ENCODE measurements at regions of chr16 and their contacts with region 1.

Region 1: DNA sequence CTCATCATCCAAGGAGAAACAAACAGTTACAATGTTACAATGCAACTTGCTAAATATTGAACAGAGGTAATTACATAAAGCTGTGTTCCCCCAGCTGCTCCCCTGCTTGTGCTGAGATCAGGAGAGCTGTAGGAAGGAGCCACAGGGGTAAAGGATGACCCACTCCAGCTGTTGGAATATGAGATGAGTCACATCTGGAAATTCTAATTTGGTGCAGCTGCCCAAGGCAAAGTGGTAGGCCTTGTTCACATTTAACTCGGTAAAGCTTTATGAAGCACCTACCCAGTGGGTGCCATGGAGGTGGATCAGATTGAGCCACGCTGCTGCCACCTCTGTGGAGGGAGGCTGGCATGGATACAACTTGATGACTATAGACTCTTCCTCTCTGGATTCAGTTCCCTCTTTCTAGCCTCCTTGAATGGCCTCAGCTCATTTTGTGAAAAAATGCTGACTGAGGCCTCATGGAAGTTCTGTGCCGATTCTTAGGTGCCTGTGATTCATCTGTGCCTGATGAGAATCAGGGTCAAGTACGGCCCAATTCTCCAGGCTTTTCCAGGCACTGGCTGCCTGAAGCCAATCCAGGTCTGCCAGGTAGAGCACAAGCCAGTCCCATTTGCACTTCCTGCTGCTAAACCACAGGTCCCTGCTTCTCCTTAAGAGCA is 7.4 kb downstream of the ZNF689 start:
- DNase-seq: no peak
- H3K4me3 Mint-ChIP-seq: no peak overlapping the region
- H3K27ac Mint-ChIP-seq: no peak overlapping the region
- H3K4me1 Mint-ChIP-seq: peaks cover 8% of the 10 kb centered on the region
- H3K27me3 Mint-ChIP-seq: no peaks in the 10 kb centered on the region

Region 2: GRCh38 chr16:30041846-30042267 is 560.9 kb before region 1 on chr16:
- CTCF ChIA-PET with region 1: no interaction called
- POLR2A ChIA-PET with region 1: no interaction called
- intact Hi-C with region 1: no loop called
- DNase-seq: no peak
- H3K4me3 Mint-ChIP-seq: no peak overlapping the region
- H3K27ac Mint-ChIP-seq: no peak overlapping the region
- H3K4me1 Mint-ChIP-seq: peaks cover 8% of the 10 kb centered on the region
- H3K27me3 Mint-ChIP-seq: peaks cover 3% of the 10 kb centered on the region

Region 3: DNA sequence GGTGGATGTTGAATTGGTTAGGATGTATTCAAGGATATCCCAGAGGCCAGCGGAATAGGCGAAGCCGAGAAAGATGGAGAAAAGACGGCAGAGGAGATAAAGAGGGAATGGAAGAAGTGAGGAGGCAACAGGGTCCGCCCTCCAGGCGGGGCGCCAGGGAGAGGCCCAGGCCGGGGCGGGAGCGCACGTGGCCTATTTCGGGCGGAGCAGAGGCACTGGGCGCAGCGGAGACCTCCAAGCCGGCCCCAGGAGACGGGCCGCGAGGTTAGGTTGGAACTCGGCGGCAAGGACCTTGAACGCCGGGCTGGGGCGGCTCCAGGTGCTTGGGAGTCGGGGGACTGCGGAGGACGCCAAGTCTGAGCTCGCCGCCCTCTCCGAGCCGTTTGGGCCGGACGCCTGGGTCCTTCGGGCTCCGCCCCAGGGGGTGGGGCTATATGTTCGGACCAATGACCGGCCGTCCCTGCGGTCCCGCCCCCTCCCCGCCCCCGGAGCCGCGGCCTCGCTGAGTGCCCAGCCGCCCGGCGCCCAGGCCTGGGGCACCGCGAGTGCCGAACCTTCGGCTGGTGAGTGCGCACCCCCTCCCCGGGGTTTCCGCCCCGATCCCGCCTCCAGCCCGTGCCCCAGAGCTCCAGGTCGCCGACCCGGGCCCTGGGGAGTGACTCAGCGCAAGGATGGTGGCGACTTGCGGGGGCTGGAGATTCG is 195.5 kb before region 1 on chr16 and contains the start of gene ZNF771:
- CTCF ChIA-PET with region 1: interaction called, 10 read pairs
- POLR2A ChIA-PET with region 1: no interaction called
- intact Hi-C with region 1: no loop called
- DNase-seq: peak; percentile 94
- H3K4me3 Mint-ChIP-seq: peak within 1 kb of the TSS; percentile 95
- H3K27ac Mint-ChIP-seq: peak within 1 kb of the TSS; percentile 91
- H3K4me1 Mint-ChIP-seq: peaks cover 25% of the 10 kb centered on the region
- H3K27me3 Mint-ChIP-seq: no peaks in the 10 kb centered on the region
- total RNA-seq, gene ZNF771: 5.4 to 5.7 TPM

Region 4: GRCh38 chr16:30557957-30558788 is 44.6 kb before region 1 on chr16 and contains the start of gene ZNF764:
- CTCF ChIA-PET with region 1: interaction called, 22 read pairs
- POLR2A ChIA-PET with region 1: interaction called, 3 read pairs
- intact Hi-C with region 1: no loop called
- DNase-seq: peak; percentile 99
- H3K4me3 Mint-ChIP-seq: peak within 1 kb of the TSS; percentile 89
- H3K27ac Mint-ChIP-seq: peak within 1 kb of the TSS; percentile 96
- H3K4me1 Mint-ChIP-seq: peaks cover 38% of the 10 kb centered on the region
- H3K27me3 Mint-ChIP-seq: no peaks in the 10 kb centered on the region
- total RNA-seq, gene ZNF764: 13.7 to 14.2 TPM

Region 5: GRCh38 chr16:30585400-30586189 is 17.2 kb before region 1 on chr16 and contains the start of gene ZNF785:
- CTCF ChIA-PET with region 1: interaction called, 29 read pairs
- POLR2A ChIA-PET with region 1: interaction called, 4 read pairs
- intact Hi-C with region 1: no loop called
- DNase-seq: peak; percentile 97
- H3K4me3 Mint-ChIP-seq: peak within 1 kb of the TSS; percentile 83
- H3K27ac Mint-ChIP-seq: peak within 1 kb of the TSS; percentile 83
- H3K4me1 Mint-ChIP-seq: peaks cover 32% of the 10 kb centered on the region
- H3K27me3 Mint-ChIP-seq: no peaks in the 10 kb centered on the region
- total RNA-seq, gene ZNF785: 14.0 to 15.0 TPM

Region 6: DNA sequence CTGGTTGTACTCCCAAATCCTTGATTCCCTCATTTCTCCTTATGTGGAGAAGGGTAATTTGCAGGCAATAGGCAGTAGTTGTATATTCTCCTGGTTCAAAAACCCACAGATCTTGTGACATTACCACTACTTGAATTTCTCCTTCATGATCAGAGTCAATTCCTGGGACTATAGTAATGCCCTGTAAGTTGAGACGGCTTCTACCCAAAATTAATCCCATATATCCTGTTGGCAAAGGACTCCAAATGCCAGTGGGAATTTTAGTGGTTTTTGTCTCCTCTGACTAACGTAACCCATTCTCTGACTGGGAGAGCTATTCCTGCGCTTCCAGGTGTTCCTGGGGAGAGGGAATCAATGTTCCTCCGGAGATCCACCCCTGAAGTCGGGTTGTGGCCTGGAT is 19.0 kb after region 1 on chr16:
- CTCF ChIA-PET with region 1: interaction called, 33 read pairs
- POLR2A ChIA-PET with region 1: no interaction called
- intact Hi-C with region 1: no loop called
- DNase-seq: no peak
- H3K4me3 Mint-ChIP-seq: no peak overlapping the region
- H3K27ac Mint-ChIP-seq: no peak overlapping the region
- H3K4me1 Mint-ChIP-seq: no peaks in the 10 kb centered on the region
- H3K27me3 Mint-ChIP-seq: peaks cover 3% of the 10 kb centered on the region

Region 7: GRCh38 chr16:31084616-31085260 is 482.0 kb after region 1 on chr16:
- CTCF ChIA-PET with region 1: no interaction called
- POLR2A ChIA-PET with region 1: no interaction called
- intact Hi-C with region 1: no loop called
- DNase-seq: no peak
- H3K4me3 Mint-ChIP-seq: no peak overlapping the region
- H3K27ac Mint-ChIP-seq: no peak overlapping the region
- H3K4me1 Mint-ChIP-seq: peaks cover 6% of the 10 kb centered on the region
- H3K27me3 Mint-ChIP-seq: no peaks in the 10 kb centered on the region